Activated CD4-positive, alpha-beta T cell treated with anti-CD3 and anti-CD28 coated beads for 36 hours (primary cell): ENCODE measurements at regions of chr19 and their contacts with region 1.

Region 1: DNA sequence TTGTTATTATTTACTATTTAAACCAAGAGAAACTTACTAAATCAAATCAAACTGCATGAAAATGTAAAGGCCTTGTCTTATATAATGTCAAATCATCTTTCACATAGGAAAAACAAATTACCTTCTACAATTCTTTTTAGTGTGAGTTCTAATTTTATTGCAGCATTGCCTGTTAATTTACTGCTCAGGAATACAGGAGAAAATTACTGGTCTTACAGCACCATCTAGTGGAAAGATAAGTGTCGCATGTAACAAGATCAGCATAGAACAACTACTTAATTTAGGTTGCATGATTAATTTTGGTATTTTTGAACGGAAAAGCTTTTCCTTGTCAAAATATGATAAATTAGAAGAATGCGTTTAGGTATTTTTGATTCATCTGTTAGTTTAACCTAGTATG is 502.7 kb downstream of the UQCRFS1 start:
- DNase-seq: no peak
- ATAC-seq: no peak
- H3K4me3 Mint-ChIP-seq: no peak overlapping the region
- H3K27ac Mint-ChIP-seq: no peak overlapping the region
- H3K4me1 Mint-ChIP-seq: no peaks in the 10 kb centered on the region
- H3K27me3 Mint-ChIP-seq: peaks cover 2% of the 10 kb centered on the region

Region 2: DNA sequence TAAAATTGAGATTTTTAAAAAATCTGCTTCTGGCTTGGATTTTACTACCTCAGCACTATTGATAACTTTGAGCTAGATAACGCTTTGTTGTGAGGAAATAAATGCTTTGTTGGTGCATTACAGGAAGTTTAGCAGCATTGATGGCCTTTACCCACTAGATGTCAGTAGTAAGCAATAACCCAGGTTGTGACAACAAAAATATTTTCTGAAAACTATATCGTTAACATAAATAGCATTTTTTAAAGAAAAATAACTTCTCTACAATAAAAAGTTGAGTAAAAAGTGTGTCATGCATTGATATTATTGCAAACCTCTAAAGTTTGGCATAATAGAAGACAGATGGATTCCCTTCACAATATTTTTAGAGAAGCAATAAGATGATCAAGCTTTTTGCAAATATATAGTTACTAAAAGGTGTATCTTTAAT is 743.9 kb before region 1 on chr19:
- CTCF ChIA-PET with region 1: interaction called, 5 read pairs
- POLR2A ChIA-PET with region 1: no interaction called
- intact Hi-C with region 1: loop called (anchors 1 to 5 kb)
- DNase-seq: no peak
- ATAC-seq: no peak
- H3K4me3 Mint-ChIP-seq: no peak overlapping the region
- H3K27ac Mint-ChIP-seq: no peak overlapping the region
- H3K4me1 Mint-ChIP-seq: no peaks in the 10 kb centered on the region
- H3K27me3 Mint-ChIP-seq: no peaks in the 10 kb centered on the region

Region 3: DNA sequence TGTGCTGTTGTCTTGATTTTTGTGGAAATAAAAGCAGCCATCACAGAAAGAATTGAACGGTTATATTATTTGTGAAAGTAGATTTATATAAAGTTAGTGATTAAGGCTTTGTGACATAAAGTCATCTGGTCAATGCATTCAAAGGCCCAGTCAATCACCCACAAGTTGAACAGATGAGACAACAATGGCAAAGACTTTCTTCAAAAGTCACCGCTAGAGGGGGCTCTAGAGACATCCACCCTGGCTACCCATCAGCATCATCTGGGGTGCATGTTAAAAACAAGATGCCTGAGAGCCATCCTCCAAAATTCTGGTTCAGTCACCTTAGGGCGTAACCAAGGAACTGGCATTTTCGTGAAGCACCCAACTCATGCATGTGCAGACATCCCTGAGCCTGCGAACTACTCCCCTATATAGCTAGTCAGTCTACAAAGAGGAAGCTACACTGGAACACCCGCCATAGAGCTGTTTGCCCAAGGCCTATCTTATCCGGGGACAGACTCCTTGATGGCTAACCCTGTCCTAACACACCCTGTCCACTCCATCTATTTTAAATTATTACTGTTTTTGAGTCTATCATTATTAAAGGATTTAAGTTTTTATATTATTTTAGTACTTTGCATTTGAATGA is 467.9 kb before region 1 on chr19:
- CTCF ChIA-PET with region 1: no interaction called
- POLR2A ChIA-PET with region 1: no interaction called
- intact Hi-C with region 1: loop called in 1 of 2 experiments (anchors 2 kb)
- DNase-seq: peak; percentile 42
- ATAC-seq: no peak
- H3K4me3 Mint-ChIP-seq: no peak overlapping the region
- H3K27ac Mint-ChIP-seq: no peak overlapping the region
- H3K4me1 Mint-ChIP-seq: no peaks in the 10 kb centered on the region
- H3K27me3 Mint-ChIP-seq: no peaks in the 10 kb centered on the region

Region 4: DNA sequence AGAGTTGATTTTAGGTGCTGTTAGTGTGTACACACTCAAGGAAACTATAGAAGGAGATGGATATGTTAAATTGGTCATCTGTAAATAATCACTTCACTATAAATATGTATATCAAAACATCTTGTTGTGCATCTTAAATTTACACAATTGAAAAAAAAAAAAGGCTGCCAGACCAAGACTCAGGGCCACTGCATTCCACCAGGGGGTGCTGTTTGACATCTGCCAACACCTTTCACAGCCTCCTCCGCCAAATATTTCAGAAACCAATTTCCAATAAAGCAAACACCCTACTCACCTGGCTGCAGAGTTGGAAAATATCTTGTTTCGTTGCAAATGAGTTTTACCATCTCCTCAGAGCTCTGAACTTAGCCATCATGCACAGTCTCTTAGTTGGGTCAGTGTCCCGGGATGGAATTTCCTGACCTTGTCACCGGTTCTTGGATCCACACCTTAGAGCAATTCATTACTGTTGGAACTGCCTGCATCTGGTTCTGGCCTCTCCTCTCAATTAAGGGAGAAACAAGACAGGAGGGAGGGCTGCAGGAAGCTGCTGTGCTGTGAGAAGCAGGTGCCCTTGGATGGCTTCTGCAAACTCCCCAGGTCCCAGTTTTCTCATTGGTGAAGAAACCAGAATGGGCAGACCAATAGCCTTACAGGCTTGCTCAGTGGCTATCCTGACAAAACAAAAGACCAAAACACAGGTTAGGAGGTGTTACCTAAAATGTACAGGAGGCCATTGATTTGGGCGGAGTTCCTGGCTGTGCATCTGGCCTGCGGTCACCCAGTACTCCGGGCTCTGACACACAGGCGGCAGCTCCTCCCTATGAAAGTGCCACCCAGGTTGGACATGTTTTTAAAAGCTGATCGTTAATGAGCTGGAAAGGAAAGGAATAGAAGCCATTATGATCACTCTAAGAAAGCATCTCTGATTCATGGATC is 243.9 kb before region 1 on chr19:
- CTCF ChIA-PET with region 1: interaction called, 7 read pairs
- POLR2A ChIA-PET with region 1: no interaction called
- intact Hi-C with region 1: loop called (anchors 1 to 2 kb)
- DNase-seq: peak; percentile 84
- ATAC-seq: no peak
- H3K4me3 Mint-ChIP-seq: no peak overlapping the region
- H3K27ac Mint-ChIP-seq: no peak overlapping the region
- H3K4me1 Mint-ChIP-seq: peaks cover 23% of the 10 kb centered on the region
- H3K27me3 Mint-ChIP-seq: peaks cover 3% of the 10 kb centered on the region

Region 5: GRCh38 chr19:28542394-28543243 is 167.7 kb before region 1 on chr19:
- CTCF ChIA-PET with region 1: no interaction called
- POLR2A ChIA-PET with region 1: no interaction called
- intact Hi-C with region 1: no loop called
- DNase-seq: no peak
- ATAC-seq: no peak
- H3K4me3 Mint-ChIP-seq: no peak overlapping the region
- H3K27ac Mint-ChIP-seq: no peak overlapping the region
- H3K4me1 Mint-ChIP-seq: no peaks in the 10 kb centered on the region
- H3K27me3 Mint-ChIP-seq: no peaks in the 10 kb centered on the region

Region 6: DNA sequence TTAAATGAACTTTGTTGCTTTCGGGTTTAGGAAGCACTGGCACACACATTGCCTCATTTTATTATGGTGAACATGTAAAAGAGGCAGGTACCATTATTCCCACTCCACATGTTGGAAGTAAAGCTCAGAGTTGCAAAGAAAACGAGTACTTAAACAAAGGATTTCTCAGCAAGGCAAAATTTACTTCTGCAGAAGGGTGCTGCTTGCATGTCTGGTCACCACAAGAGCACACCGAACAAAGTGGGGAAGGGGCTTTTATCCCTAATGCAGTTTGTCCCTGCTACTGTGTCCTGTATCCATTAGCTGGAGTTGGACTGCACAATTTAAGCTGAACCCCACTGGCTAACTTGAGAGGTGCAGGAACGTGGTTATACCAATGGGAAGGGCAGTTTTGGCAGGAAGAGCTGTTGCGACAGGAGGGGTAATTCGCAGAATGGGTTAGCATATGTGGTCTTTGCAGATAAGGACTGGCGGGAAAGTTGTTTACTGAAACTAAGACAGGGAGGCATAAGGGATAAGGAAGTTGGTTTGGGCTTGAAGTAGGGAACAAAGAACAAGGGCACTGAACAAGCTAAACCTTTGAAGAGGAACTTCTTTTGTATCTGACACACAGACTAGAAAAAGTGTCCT is 42.8 kb before region 1 on chr19:
- CTCF ChIA-PET with region 1: no interaction called
- POLR2A ChIA-PET with region 1: no interaction called
- intact Hi-C with region 1: no loop called
- DNase-seq: no peak
- ATAC-seq: no peak
- H3K4me3 Mint-ChIP-seq: no peak overlapping the region
- H3K27ac Mint-ChIP-seq: no peak overlapping the region
- H3K4me1 Mint-ChIP-seq: no peaks in the 10 kb centered on the region
- H3K27me3 Mint-ChIP-seq: no peaks in the 10 kb centered on the region

Region 7: GRCh38 chr19:29185427-29185826 is 475.1 kb after region 1 on chr19:
- CTCF ChIA-PET with region 1: no interaction called
- POLR2A ChIA-PET with region 1: no interaction called
- intact Hi-C with region 1: no loop called
- DNase-seq: no peak
- ATAC-seq: no peak
- H3K4me3 Mint-ChIP-seq: no peak overlapping the region
- H3K27ac Mint-ChIP-seq: no peak overlapping the region
- H3K4me1 Mint-ChIP-seq: no peaks in the 10 kb centered on the region
- H3K27me3 Mint-ChIP-seq: peaks cover 2% of the 10 kb centered on the region